CD4-positive, alpha-beta memory T cell (primary cell): ENCODE measurements at regions of chr15 and their contacts with region 1.

Region 1: GRCh38 chr15:75616764-75617163 is 8.8 kb downstream of the SNUPN start:
- DNase-seq: no peak
- H3K4me3 ChIP-seq: no peak overlapping the region
- H3K4me3 Mint-ChIP-seq: no peak overlapping the region
- H3K27ac ChIP-seq: no peak overlapping the region
- H3K27ac Mint-ChIP-seq: peak overlapping the region in 4 of 7 donors; percentile 22 to 62 (median 43)
- H3K4me1 ChIP-seq: peaks cover 17% of the 10 kb centered on the region
- H3K4me1 Mint-ChIP-seq: peaks cover 17 to 28% (median 24%) of the 10 kb centered on the region in 4 donors
- H3K27me3 ChIP-seq: no peaks in the 10 kb centered on the region
- H3K27me3 Mint-ChIP-seq: no peaks in the 10 kb centered on the region

Region 2: GRCh38 chr15:75591655-75592364 is 25.0 kb before region 1 on chr15:
- CTCF ChIA-PET with region 1: interaction called, 8 read pairs
- POLR2A ChIA-PET with region 1: no interaction called
- intact Hi-C with region 1: loop called (anchors 1 kb)
- DNase-seq: no peak
- H3K4me3 ChIP-seq: no peak overlapping the region
- H3K4me3 Mint-ChIP-seq: no peak overlapping the region
- H3K27ac ChIP-seq: no peak overlapping the region
- H3K27ac Mint-ChIP-seq: peak overlapping the region in 3 of 7 donors; percentile 57 to 59 (median 57)
- H3K4me1 ChIP-seq: peaks cover under 1% of the 10 kb centered on the region
- H3K4me1 Mint-ChIP-seq: peaks cover 6 to 17% (median 10%) of the 10 kb centered on the region in 4 donors
- H3K27me3 ChIP-seq: no peaks in the 10 kb centered on the region
- H3K27me3 Mint-ChIP-seq: no peaks in the 10 kb centered on the region

Region 3: GRCh38 chr15:75776065-75776423 is 159.3 kb after region 1 on chr15:
- CTCF ChIA-PET with region 1: no interaction called
- POLR2A ChIA-PET with region 1: no interaction called
- intact Hi-C with region 1: no loop called
- DNase-seq: no peak
- H3K4me3 ChIP-seq: no peak overlapping the region
- H3K4me3 Mint-ChIP-seq: no peak overlapping the region
- H3K27ac ChIP-seq: no peak overlapping the region
- H3K27ac Mint-ChIP-seq: no peak overlapping the region
- H3K4me1 ChIP-seq: no peaks in the 10 kb centered on the region
- H3K4me1 Mint-ChIP-seq: no peaks in the 10 kb centered on the region
- H3K27me3 ChIP-seq: no peaks in the 10 kb centered on the region
- H3K27me3 Mint-ChIP-seq: peaks cover 0 to 3% of the 10 kb centered on the region in 2 donors